ENCODE measurements at regions of chrX and their contacts with region 1.

Region 1: GRCh38 chrX:77899081-77899828 is at the start of gene COX7B:
- DNase-seq: peak; percentile 75
- H3K4me3 Mint-ChIP-seq: peak within 1 kb of the TSS; percentile 91
- H3K27ac Mint-ChIP-seq: peak within 1 kb of the TSS; percentile 93
- H3K4me1 Mint-ChIP-seq: no peaks in the 10 kb centered on the region
- H3K27me3 Mint-ChIP-seq: no peaks in the 10 kb centered on the region
- CTCF ChIP-seq: no peak
- total RNA-seq, gene COX7B: 309 and 326 TPM in 2 replicates

Region 2: DNA sequence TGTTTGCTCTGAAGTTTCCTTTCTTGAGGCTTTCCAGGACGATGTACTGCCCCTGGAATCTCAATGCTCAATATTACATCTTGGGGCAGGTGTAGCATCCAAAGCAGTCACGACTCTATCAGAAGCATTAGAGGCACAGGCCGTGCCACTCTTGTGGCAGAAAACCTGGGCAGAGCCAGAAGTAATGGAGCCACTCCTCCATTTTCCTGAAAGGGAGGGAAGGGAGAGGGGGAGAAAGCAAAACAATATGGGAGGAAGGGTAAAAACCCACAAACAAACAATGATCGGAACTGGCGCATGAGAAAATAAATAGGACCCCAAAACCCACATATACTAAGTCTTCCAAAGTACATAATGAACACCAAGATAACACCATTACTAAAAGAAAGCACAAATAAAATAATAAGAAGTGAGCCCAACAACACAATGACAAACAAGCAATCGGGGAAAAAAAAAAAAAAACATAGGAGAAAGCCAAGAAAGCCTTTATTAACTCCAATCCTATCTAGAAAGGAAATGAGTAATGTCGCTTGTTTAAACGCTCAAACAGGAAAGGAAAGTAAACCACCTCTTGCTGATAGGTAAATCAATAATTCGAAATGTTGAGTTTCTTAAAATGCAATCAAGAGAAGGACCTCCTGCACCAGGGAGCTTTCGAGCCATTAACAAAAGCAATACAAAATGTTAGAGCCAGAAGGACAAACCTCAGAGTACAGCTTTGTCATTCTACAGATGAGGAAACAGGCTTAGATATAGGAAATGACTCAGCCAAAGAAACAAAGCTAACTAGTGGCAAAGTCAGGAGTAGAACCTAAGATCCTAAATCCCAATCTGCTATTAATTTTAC is 230.6 kb before region 1 on chrX:
- CTCF ChIA-PET with region 1: no interaction called
- intact Hi-C with region 1: loop called (anchors 5 kb)
- DNase-seq: peak; percentile 15
- H3K4me3 Mint-ChIP-seq: peak overlapping the region; percentile 37
- H3K27ac Mint-ChIP-seq: peak overlapping the region; percentile 45
- H3K4me1 Mint-ChIP-seq: peaks cover 8% of the 10 kb centered on the region
- H3K27me3 Mint-ChIP-seq: no peaks in the 10 kb centered on the region
- CTCF ChIP-seq: no peak

Region 3: DNA sequence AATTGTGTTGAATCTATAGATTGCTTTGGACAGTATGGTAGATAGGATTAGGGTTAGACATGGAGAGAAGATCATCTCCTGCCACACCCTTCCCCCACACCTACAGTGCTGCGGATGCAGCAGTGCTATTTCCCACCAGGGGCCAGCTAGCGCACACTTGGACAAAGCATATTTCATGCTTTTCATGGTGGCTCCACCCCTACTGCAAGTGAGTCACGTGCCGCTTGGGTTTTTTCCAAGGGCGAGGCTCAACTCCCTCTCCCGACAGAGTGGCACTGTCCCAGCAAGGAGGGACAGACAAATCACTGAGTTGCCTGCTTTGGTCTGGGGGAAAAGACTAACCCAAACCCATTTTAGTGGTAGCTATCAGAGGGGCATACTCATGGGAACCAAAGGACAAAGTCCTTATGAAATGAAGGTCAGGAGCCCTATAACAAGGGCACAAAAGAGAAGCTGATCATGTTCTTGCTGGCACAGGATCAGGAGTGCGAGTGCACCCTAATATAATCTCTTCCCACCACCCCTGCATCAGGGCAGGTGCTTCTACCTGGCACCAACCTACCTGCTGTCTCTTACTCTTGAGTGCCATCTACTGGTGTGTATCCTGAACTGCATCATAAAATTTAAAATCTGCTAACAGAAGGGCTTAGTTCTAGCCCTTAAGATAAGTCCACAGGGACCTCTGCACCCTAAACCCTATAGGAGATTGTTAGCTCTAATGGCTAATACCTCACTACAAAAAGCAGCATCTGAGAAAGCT is 125.3 kb after region 1 on chrX:
- CTCF ChIA-PET with region 1: interaction called, 11 read pairs
- intact Hi-C with region 1: no loop called
- DNase-seq: peak; percentile 67
- H3K4me3 Mint-ChIP-seq: peak overlapping the region; percentile 51
- H3K27ac Mint-ChIP-seq: peak overlapping the region; percentile 79
- H3K4me1 Mint-ChIP-seq: peaks cover 16% of the 10 kb centered on the region
- H3K27me3 Mint-ChIP-seq: no peaks in the 10 kb centered on the region
- CTCF ChIP-seq: peak; percentile 73

Region 4: DNA sequence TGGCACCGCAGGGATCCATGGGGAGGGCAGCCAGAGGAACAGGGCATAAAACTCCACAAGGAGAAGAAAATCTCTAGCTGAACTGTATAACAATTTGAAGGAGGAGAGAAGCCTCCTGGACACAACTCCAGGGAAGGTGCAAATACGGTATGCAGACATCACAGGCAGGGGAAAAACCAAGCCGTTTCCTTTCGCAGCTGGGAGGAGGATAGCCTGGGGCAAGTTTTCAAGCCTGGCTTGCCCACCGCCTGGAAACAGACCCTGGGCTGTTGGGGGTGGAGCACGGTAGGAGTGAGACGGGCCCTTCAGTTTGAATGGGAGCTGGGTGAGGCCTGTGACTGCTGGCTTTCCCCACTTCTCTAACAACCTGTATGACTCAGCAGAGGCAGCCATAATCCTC is 283.6 kb after region 1 on chrX:
- CTCF ChIA-PET with region 1: no interaction called
- intact Hi-C with region 1: no loop called
- DNase-seq: no peak
- H3K4me3 Mint-ChIP-seq: no peak overlapping the region
- H3K27ac Mint-ChIP-seq: no peak overlapping the region
- H3K4me1 Mint-ChIP-seq: no peaks in the 10 kb centered on the region
- H3K27me3 Mint-ChIP-seq: peaks cover 14% of the 10 kb centered on the region
- CTCF ChIP-seq: no peak

Measured in Calu3 (cell line).